ENCODE measurements at regions of chr6 and their contacts with region 1.

Region 1: GRCh38 chr6:52647199-52647598 is 23.7 kb upstream of the TMEM14A start:
- DNase-seq: no peak
- H3K4me3 ChIP-seq: no peak overlapping the region
- H3K27ac ChIP-seq: no peak overlapping the region
- H3K4me1 ChIP-seq: peaks cover 3 to 15% of the 10 kb centered on the region in 2 experiments; a peak in 3 of 4 replicates
- H3K27me3 ChIP-seq: no peaks in the 10 kb centered on the region
- CTCF ChIP-seq: no peak
- EP300 ChIP-seq: no peak
- RAD21 ChIP-seq: no peak

Region 2: DNA sequence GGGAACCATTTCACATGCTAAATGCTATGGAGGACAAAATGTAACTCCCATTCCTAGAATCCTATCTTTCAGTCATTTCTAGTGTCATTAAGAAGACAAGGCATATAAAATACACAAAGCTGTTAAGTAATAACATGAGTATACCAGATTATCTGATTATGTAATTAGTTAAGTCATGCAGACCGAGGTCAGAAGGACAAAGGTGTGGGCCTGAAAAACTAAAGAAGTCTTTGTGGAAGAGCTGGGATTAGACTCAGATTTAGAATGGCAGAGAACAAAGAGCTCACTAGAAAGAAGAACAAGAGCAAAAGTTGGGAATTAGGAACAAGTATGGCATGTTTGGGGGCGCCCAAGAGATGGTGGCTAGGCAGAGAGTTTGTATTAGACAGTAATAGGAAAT is 190.1 kb before region 1 on chr6:
- CTCF ChIA-PET with region 1: no interaction called
- POLR2A ChIA-PET with region 1: no interaction called
- DNase-seq: no peak
- H3K4me3 ChIP-seq: no peak overlapping the region
- H3K27ac ChIP-seq: no peak overlapping the region
- H3K4me1 ChIP-seq: no peaks in the 10 kb centered on the region; a peak in 1 of 4 replicates
- H3K27me3 ChIP-seq: no peaks in the 10 kb centered on the region
- CTCF ChIP-seq: no peak
- EP300 ChIP-seq: no peak
- RAD21 ChIP-seq: no peak

Region 3: GRCh38 chr6:52590152-52590931 is 56.9 kb before region 1 on chr6:
- CTCF ChIA-PET with region 1: interaction called, 12 read pairs
- POLR2A ChIA-PET with region 1: no interaction called
- DNase-seq: peak; percentile 69
- H3K4me3 ChIP-seq: no peak overlapping the region
- H3K27ac ChIP-seq: peak overlapping the region in 1 of 2 experiments; percentile 97; a peak in 2 of 4 replicates
- H3K4me1 ChIP-seq: peaks cover 26 to 66% of the 10 kb centered on the region in 2 experiments
- H3K27me3 ChIP-seq: no peaks in the 10 kb centered on the region
- CTCF ChIP-seq: peak; percentile 37
- EP300 ChIP-seq: peak in 1 of 2 experiments; percentile 80; a peak in 1 of 4 replicates
- RAD21 ChIP-seq: peak; percentile 48

Region 4: GRCh38 chr6:52598123-52598823 is 48.9 kb before region 1 on chr6:
- CTCF ChIA-PET with region 1: interaction called, 44 read pairs
- POLR2A ChIA-PET with region 1: no interaction called
- DNase-seq: peak; percentile 74
- H3K4me3 ChIP-seq: peak overlapping the region; percentile 17 to 34; a peak in 2 of 4 replicates
- H3K27ac ChIP-seq: peak overlapping the region; percentile 86 to 97
- H3K4me1 ChIP-seq: peaks cover 47 to 49% of the 10 kb centered on the region in 2 experiments
- H3K27me3 ChIP-seq: no peaks in the 10 kb centered on the region
- CTCF ChIP-seq: peak; percentile 80
- EP300 ChIP-seq: peak in 1 of 2 experiments; percentile 58; a peak in 2 of 4 replicates
- RAD21 ChIP-seq: peak; percentile 81

Region 5: DNA sequence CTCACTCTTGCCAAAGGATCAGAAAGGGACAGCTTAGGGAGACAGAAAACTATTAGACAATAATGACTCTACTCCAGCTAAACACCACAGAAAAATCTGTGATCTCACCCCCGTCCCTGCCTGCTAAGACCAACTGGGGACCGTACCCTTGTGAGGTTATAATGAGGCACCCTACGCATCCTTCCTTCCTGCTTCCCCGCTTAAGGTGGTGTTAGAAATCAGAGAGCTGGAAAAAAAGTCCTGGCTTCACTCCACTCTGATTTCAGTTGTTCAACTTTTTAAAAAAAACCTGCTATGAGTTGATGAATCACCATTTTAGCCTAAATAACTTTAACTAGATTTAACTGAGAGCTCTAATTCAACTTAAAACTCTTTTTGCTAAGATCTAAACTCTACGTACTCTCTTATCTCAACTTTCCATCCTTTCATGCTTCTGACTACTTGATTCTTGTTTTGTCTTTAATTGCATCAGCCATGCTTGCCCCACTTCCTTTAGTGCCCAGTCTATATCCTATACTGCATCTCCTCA is 12.1 kb before region 1 on chr6:
- CTCF ChIA-PET with region 1: interaction called, 33 read pairs
- POLR2A ChIA-PET with region 1: no interaction called
- DNase-seq: no peak
- H3K4me3 ChIP-seq: no peak overlapping the region
- H3K27ac ChIP-seq: peak overlapping the region; percentile 0 to 44; a peak in 1 of 4 replicates
- H3K4me1 ChIP-seq: peaks cover 0 to 15% of the 10 kb centered on the region in 2 experiments; a peak in 3 of 4 replicates
- H3K27me3 ChIP-seq: no peaks in the 10 kb centered on the region
- CTCF ChIP-seq: no peak
- EP300 ChIP-seq: no peak
- RAD21 ChIP-seq: no peak

Region 6: DNA sequence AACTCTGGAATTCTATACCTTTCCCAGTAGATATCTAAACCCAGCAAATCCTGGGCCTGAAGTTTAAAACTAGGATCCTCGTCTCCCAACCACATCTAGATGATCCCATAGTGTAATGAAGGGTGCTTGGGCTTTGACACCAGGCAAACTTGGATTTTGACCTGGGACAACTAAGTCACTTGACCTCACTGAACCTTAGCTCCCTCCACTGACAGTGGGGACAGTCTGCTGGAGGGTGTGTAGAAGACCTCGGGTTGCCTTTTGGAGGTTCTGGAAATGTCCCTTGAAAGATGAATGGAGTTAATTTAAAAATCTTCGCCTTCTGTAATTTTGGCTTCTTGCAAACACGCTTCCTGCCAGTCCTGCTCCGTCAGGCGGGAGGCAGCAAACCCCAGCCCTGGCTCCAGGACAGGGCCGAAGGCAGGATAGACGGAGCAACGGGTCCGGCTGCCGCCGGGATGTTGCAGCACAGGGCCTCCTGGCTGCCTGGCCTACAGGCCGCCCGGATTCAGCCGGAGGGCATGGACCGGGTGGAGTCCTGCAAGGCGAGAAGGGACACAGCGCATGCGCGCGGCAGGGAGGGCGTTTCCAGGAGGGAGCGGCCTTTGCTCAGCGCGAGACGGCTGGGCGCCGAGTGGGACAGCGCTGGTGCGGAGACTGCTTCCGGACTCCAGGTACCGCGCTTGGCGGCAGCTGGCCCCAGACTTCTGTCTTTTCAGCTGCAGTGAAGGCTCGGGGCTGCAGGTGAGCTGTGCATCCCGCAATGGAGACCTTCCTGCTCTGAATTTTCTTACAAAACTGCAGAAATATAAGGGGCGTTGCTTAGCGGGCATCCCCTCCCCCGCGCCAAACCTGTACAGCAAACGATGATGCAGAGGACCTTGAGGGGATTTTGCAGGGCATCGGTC is 23.6 kb after region 1 on chr6 and contains the start of gene TMEM14A:
- CTCF ChIA-PET with region 1: interaction called, 11 read pairs
- POLR2A ChIA-PET with region 1: no interaction called
- DNase-seq: peak; percentile 96
- H3K4me3 ChIP-seq: peak within 1 kb of the TSS; percentile 81 to 92
- H3K27ac ChIP-seq: peak within 1 kb of the TSS; percentile 25 to 88; a peak in 2 of 4 replicates
- H3K4me1 ChIP-seq: peaks cover 3 to 30% of the 10 kb centered on the region in 2 experiments; a peak in 2 of 4 replicates
- H3K27me3 ChIP-seq: no peaks in the 10 kb centered on the region
- CTCF ChIP-seq: no peak
- EP300 ChIP-seq: no peak
- RAD21 ChIP-seq: peak; percentile 14; the same call in 1 of the 2 replicates
- polyA plus RNA-seq, gene TMEM14A: 42.4 and 48.7 TPM in 2 replicates